Ascending aorta (tissue), 2 donors: ENCODE measurements at regions of chr11 and their contacts with region 1.

Region 1: DNA sequence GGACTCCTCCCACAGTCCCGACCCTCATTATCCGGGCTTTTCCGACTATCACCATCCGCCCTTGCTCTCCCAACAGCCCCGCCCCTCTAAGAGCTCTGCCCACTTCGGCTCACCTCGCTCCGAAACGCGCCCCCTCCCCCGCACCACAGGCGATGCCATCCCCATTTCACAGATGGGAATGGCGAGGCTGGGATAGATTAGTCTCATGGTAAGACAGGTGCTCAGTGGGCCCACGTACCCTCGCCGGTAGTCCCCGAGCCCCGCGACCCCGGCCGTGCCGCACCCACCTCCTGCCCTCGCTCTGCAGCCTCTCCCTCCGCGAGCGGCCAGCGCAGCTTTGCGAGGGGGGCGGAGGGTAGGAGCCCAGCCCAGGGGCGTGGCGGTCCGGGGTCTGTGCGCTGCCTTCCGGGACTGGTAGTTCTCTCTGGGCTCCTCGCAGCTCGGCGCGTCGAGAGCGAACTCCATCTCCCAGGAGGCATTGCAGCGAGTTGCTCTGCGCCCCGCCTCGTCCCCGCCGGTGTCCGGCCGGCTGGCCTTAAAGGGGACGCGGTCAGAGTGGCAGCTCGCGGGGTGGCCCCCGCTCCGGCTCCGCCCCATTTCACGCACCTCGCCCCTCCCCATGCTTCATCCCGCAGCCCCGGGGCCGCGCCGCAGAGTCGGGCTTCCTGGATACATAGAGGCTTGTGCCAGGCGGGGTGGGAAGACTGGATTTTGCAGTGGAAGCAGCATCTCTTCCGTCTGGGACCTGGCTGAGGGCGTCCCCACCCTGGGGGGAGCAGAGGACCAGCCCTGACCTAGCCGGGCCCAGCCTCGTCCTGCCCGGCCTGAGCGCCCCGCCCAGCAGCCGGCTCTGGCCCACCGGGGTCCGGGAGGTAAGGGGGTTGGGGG is at the starts of genes KCTD21 and USP35:
- DNase-seq: peak; percentile 95 to 99
- H3K4me3 ChIP-seq: peak within 1 kb of the TSS; percentile 72 to 91
- H3K27ac ChIP-seq: peak within 1 kb of the TSS; percentile 87 to 91
- H3K4me1 ChIP-seq: peaks cover 8 to 43% of the 10 kb centered on the region in 2 donors
- H3K27me3 ChIP-seq: no peaks in the 10 kb centered on the region
- CTCF ChIP-seq: no peak
- total RNA-seq, gene KCTD21: 30.7 TPM
- total RNA-seq, gene USP35: 34.0 TPM

Region 2: GRCh38 chr11:77994412-77995362 is 193.8 kb before region 1 on chr11 and contains the start of gene INTS4:
- intact Hi-C with region 1: loop called (anchors 10 kb)
- DNase-seq: peak; percentile 97 to 99
- H3K4me3 ChIP-seq: peak within 1 kb of the TSS; percentile 63 to 65
- H3K27ac ChIP-seq: peak within 1 kb of the TSS; percentile 79
- H3K4me1 ChIP-seq: peaks cover 0 to 11% of the 10 kb centered on the region in 2 donors
- H3K27me3 ChIP-seq: no peaks in the 10 kb centered on the region
- CTCF ChIP-seq: peak in 1 of 3 experiments; percentile 15
- total RNA-seq, gene INTS4: 10.7 TPM

Region 3: GRCh38 chr11:78139422-78140391 is 48.8 kb before region 1 on chr11 and contains the start of gene ALG8:
- intact Hi-C with region 1: loop called (anchors 1 kb)
- DNase-seq: peak; percentile 78 to 97
- H3K4me3 ChIP-seq: peak within 1 kb of the TSS; percentile 73 to 77
- H3K27ac ChIP-seq: peak within 1 kb of the TSS; percentile 54 to 75
- H3K4me1 ChIP-seq: peaks cover 7 to 14% of the 10 kb centered on the region in 2 donors
- H3K27me3 ChIP-seq: no peaks in the 10 kb centered on the region
- CTCF ChIP-seq: no peak
- total RNA-seq, gene ALG8: 27.0 TPM

Region 4: GRCh38 chr11:78149646-78150045 is 38.9 kb before region 1 on chr11:
- intact Hi-C with region 1: loop called (anchors 2 kb)
- DNase-seq: peak in 1 of 2 donors; percentile 80
- H3K4me3 ChIP-seq: no peak overlapping the region
- H3K27ac ChIP-seq: no peak overlapping the region
- H3K4me1 ChIP-seq: peaks cover 0 to 6% of the 10 kb centered on the region in 2 donors
- H3K27me3 ChIP-seq: no peaks in the 10 kb centered on the region
- CTCF ChIP-seq: peak in 2 of 3 experiments; percentile 34 to 56

Region 5: DNA sequence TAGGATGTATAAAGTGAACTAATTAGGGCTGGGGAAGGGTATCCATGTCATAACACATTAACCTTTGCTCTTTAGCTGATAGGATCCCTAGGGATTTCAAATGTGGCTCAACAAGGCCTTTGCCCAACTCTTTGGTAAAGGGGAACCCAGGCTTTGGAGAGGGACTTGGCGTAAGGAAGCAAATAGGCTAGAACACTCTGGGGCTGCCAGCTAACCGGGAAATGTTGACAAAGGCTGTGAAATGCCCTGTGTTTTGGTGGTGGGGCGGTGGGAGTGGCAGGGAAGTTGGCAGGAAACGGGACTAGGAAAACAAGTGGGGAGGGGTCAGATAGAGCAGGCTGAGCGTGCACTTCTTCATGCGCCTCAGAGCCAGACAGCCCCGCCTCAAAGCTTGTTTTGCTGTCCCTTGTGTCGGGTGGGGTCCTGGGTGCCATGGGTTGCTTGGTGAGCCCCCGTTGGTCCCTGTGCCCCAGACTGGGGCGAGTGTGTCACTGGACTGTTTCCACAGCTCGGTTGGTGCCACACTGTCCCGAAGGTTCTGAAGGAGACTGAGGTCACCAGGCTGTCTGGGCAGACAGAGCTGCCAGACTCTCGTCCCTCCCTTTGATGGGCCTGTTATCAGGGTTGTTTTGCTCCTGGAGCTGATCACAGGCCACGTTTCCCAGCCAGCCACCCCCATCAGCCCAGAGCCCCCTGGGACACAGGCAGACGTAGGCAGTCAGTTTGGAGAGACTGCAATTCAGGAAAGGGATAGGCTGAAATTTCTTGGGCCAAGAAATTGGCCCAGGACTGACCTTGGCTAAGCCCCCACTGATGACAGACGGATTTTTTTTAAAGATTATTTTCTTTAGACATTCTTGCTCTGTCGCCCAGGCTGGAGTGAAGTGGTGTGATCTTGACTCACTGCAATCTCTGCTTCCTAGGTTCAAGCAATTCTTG is 19.7 kb before region 1 on chr11:
- intact Hi-C with region 1: loop called (anchors 1 kb)
- DNase-seq: peak; percentile 87 to 98
- H3K4me3 ChIP-seq: no peak overlapping the region
- H3K27ac ChIP-seq: peak overlapping the region; percentile 96
- H3K4me1 ChIP-seq: peaks cover 6 to 46% of the 10 kb centered on the region in 2 donors
- H3K27me3 ChIP-seq: no peaks in the 10 kb centered on the region
- CTCF ChIP-seq: no peak

Region 6: GRCh38 chr11:78212586-78213371 is 24.2 kb after region 1 on chr11:
- intact Hi-C with region 1: loop called (anchors 2 kb)
- DNase-seq: peak in 1 of 2 donors; percentile 65
- H3K4me3 ChIP-seq: no peak overlapping the region
- H3K27ac ChIP-seq: peak overlapping the region; percentile 48 to 49
- H3K4me1 ChIP-seq: no peaks in the 10 kb centered on the region
- H3K27me3 ChIP-seq: no peaks in the 10 kb centered on the region
- CTCF ChIP-seq: no peak